ENCODE measurements at regions of chrX and their contacts with region 1.

Region 1: GRCh38 chrX:19334945-19335626 is 8.6 kb upstream of the PDHA1 start:
- DNase-seq: peak; percentile 40
- CTCF ChIP-seq: peak; percentile 29

Region 2: GRCh38 chrX:18390941-18391538 is 944.0 kb before region 1 on chrX:
- CTCF ChIA-PET with region 1: interaction called, 18 read pairs
- POLR2A ChIA-PET with region 1: no interaction called
- DNase-seq: peak; percentile 42
- CTCF ChIP-seq: peak; percentile 24

Region 3: GRCh38 chrX:19040373-19040772 is 294.7 kb before region 1 on chrX:
- CTCF ChIA-PET with region 1: interaction called, 10 read pairs
- POLR2A ChIA-PET with region 1: no interaction called
- DNase-seq: no peak
- CTCF ChIP-seq: peak; percentile 29

Measured in GM10248 (cell line).